WTC11 (cell line): ENCODE measurements at regions of chr10 and their contacts with region 1.

Region 1: DNA sequence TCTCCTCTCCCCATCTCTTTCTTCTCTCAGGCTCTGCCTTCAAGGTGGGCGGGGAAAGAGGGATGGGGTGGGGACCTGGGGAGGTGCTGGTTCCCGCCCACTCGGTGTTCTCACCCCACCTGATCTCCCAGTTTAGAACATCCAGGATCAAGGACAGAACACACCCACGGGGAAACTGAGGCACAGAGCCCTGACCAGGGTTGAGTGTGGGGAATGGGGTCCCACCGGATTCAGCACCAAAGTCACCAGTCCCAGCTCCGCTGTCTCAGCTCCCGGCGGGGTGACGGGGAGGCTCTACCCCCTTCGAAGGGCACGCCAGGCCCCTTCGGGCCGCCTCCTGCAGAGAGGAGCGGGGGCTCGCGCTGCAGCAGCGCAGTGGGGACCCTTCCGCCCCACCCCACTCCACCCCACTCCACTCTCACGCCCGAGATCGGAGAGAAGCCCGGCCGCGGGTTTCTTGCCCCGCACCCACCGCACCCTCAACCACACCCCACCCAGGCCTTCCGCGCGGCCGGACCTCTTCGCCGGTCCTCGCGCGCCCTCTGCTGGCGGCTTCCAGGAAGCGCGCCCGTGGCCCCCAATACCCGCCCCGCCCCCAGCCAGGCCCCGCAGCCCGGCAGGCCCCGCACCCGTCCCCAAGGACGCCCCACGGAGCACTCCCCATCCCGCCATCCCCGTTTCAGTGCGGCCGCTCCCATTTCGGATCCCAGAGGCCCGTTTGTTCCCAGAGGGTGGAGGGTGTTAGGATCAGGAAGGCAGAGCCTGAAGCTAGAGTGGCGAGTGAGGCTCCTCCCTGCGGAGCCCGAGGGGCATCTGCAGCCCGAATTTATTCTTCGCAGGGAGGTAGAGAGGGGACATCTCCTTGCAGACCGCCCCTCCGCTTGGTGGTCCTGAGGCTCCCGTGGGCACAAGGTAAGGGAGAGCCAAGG is 18.0 kb downstream of the POLL start:
- DNase-seq: peak; percentile 82
- ATAC-seq: peak; percentile 55
- H3K4me3 Mint-ChIP-seq: peak overlapping the region; percentile 79
- H3K27ac Mint-ChIP-seq: no peak overlapping the region
- H3K4me1 Mint-ChIP-seq: peaks cover 36% of the 10 kb centered on the region
- H3K27me3 Mint-ChIP-seq: peaks cover 78% of the 10 kb centered on the region
- CTCF ChIP-seq: peak; percentile 95

Region 2: DNA sequence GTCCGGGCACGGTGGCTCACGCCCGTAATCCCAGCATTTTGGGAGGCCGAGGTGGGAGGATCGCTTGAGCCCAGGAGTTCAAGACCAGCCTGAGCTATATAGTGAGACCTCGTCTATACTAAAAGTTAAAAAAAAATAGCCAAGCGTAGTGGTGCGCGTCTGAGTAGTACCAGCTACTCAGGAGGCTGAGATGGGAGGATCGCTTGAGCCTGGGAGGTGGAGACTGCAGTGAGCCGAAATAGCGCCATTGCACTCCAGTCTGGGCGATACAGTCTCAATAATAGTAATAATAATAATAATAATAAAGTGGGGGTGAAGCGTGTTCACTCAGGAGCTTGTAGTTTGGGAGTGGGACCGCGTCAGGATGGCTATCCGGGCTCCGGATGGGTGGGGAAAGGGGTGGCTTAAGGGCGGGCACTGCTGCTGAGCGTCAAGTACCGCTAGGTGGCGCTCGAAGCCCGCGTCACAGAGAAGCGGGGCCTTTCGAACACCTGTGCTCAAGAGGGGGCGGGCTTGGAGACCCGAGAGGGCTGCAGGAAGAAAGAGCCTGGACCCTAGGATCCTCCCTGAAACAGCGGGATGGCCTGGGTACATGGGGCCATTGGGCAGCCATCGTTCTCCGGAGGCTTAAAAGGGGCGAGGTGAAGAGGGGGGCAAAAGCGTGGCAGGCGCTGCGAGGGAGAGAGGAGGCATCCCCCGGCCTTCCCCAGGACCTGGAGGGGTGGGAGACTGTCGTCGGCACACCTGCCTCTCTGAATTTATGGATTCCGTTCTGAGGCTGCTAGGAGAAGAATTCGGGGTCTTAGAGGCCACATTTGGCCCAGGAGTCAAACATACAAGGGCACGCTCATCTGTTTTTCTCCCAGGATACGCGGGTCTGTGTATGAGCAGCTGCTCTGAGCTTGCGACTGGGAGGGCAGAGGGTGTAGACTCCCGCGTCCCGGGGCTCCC is 355.4 kb before region 1 on chr10:
- CTCF ChIA-PET with region 1: interaction called, 80 read pairs
- POLR2A ChIA-PET with region 1: interaction called, 8 read pairs
- DNase-seq: peak; percentile 93
- ATAC-seq: peak; percentile 65
- H3K4me3 Mint-ChIP-seq: peak overlapping the region; percentile 76
- H3K27ac Mint-ChIP-seq: no peak overlapping the region
- H3K4me1 Mint-ChIP-seq: peaks cover 30% of the 10 kb centered on the region
- H3K27me3 Mint-ChIP-seq: peaks cover 96% of the 10 kb centered on the region
- CTCF ChIP-seq: peak; percentile 83

Region 3: GRCh38 chr10:101272229-101272868 is 297.8 kb before region 1 on chr10:
- CTCF ChIA-PET with region 1: interaction called, 15 read pairs
- POLR2A ChIA-PET with region 1: no interaction called
- DNase-seq: peak; percentile 84
- ATAC-seq: peak; percentile 97
- H3K4me3 Mint-ChIP-seq: no peak overlapping the region
- H3K27ac Mint-ChIP-seq: no peak overlapping the region
- H3K4me1 Mint-ChIP-seq: peaks cover 14% of the 10 kb centered on the region
- H3K27me3 Mint-ChIP-seq: peaks cover 15% of the 10 kb centered on the region
- CTCF ChIP-seq: peak; percentile 68

Region 4: GRCh38 chr10:101297901-101298486 is 272.1 kb before region 1 on chr10:
- CTCF ChIA-PET with region 1: interaction called, 35 read pairs
- POLR2A ChIA-PET with region 1: interaction called, 3 read pairs
- DNase-seq: peak; percentile 92
- ATAC-seq: peak; percentile 81
- H3K4me3 Mint-ChIP-seq: no peak overlapping the region
- H3K27ac Mint-ChIP-seq: no peak overlapping the region
- H3K4me1 Mint-ChIP-seq: peaks cover 10% of the 10 kb centered on the region
- H3K27me3 Mint-ChIP-seq: peaks cover 69% of the 10 kb centered on the region
- CTCF ChIP-seq: peak; percentile 86

Region 5: DNA sequence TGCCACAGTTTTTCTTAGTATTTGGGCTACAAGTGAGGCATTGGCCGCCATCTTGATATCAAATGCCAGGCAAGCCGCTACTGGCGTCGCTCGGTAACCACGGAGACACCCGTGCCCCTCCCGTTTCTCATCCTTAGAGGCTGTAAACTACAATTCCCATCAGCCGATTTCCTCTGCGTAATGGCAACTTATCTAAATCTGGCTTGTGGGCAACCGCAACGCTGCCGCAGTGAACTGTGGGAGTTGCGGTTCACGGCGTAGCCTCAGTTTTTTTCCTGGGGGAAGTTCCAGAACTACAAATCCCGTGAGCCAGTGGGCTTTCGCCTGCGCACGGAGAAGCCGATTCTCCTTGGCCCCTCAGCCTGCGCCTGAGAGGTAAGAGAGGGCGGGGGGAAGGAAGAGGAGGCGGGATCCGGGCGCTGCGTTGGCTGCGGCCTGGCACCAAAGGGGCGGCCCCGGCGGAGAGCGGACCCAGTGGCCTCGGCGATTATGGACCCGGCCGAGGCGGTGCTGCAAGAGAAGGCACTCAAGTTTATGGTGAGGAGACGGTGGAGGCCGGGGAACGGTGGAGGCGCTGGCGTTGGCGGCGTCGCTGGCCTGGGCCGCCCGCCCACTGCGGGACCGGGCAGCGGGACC is 216.3 kb before region 1 on chr10 and contains the start of gene BTRC:
- CTCF ChIA-PET with region 1: no interaction called
- POLR2A ChIA-PET with region 1: no interaction called
- DNase-seq: peak; percentile 97
- ATAC-seq: peak; percentile 96
- H3K4me3 Mint-ChIP-seq: peak within 1 kb of the TSS; percentile 98
- H3K27ac Mint-ChIP-seq: peak within 1 kb of the TSS; percentile 97
- H3K4me1 Mint-ChIP-seq: peaks cover 12% of the 10 kb centered on the region
- H3K27me3 Mint-ChIP-seq: peaks cover 8% of the 10 kb centered on the region
- CTCF ChIP-seq: no peak
- total RNA-seq, gene BTRC: 20.6 to 22.4 TPM (median 22.2 TPM) in 3 replicates

Region 6: DNA sequence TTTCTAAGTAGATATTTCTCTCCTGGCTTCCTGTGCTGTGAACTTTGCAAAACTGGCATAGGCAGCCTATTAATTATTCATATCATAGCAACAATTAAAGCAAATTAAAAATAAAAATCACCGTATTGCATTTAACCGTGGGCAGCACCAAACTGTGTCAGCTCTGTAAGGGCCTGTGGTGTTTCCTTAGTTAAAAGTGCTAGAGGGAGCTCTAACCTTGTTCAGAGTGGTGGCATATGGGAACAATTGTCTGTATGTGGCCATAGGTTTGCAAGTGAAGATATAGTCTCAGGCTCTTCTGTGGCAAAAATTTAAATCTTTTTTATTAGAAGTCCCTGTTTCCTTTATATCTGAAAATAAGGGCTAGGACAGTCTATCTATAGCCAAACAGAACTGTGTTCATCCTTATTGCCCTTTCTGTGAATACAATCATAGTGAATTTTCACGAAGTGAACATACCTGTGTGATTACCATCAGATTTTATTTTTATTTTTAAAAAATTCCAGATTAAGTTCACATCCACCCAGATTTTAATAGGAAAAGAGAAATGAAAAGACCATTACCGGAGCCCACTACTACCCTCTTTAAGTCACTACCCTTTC is 74.7 kb before region 1 on chr10:
- CTCF ChIA-PET with region 1: interaction called, 26 read pairs
- POLR2A ChIA-PET with region 1: no interaction called
- DNase-seq: no peak
- ATAC-seq: peak; percentile 95
- H3K4me3 Mint-ChIP-seq: no peak overlapping the region
- H3K27ac Mint-ChIP-seq: no peak overlapping the region
- H3K4me1 Mint-ChIP-seq: peaks cover 26% of the 10 kb centered on the region
- H3K27me3 Mint-ChIP-seq: no peaks in the 10 kb centered on the region
- CTCF ChIP-seq: no peak

Region 7: DNA sequence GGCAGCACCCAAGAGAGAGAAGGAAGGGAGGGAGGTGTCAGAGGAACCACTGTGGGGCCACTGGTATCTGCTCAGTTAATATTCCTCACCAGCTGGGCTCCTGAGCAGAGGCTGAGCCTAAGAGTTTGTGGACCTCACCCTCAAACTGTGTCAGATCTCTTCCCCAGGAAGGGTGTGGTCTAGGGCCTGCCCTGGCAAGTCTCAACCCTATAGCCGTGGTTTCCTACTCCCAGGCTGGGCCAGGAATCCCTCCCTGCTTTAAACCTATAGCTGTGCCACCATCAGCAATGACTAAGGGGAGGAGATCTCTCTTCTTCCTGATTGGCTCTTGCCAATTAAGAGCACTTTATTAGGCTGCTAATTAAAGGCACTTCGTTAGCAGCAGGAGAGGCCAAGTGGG is 11.9 kb before region 1 on chr10:
- CTCF ChIA-PET with region 1: interaction called, 27 read pairs
- POLR2A ChIA-PET with region 1: no interaction called
- DNase-seq: no peak
- ATAC-seq: peak; percentile 24; the same call in 1 of the 2 replicates
- H3K4me3 Mint-ChIP-seq: no peak overlapping the region
- H3K27ac Mint-ChIP-seq: no peak overlapping the region
- H3K4me1 Mint-ChIP-seq: peaks cover 7% of the 10 kb centered on the region
- H3K27me3 Mint-ChIP-seq: peaks cover 2% of the 10 kb centered on the region; the same call in 1 of the 2 replicates
- CTCF ChIP-seq: no peak

Region 8: DNA sequence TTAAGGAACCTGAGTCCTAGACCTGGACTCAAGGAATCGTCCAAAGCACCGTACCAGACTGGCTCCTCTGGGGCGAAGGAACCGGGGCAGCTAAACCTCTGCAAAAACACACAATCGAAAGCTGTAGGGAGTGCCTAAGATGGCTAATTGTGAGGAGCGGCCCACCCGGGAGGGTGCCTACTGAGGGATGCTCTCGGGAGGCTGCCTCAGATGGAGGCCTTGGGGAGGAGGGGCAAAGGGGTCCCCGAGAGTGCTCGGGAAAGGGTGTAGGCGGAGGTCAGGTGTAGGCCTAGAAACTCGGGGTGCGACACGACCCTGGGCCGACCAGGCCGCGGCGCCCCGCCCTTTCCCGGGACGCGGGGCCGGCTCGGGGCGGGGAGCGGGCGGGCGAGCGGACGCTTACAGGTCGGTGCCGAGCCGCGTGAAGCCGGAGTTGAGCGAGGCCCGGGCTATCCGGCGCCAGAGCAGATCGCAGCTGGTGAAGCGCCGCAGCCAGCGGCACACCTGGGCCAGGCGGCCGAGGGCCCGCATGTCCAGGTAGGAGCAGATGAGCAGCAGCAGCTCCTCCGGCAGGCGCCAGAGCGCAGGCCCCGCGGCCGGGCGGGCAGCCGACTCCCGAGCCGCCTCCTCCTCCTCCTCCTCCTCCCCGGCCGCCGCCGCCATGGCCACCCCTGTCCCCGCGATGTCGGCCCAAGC is 124.0 kb after region 1 on chr10:
- CTCF ChIA-PET with region 1: no interaction called
- POLR2A ChIA-PET with region 1: no interaction called
- DNase-seq: peak; percentile 72
- ATAC-seq: peak; percentile 79
- H3K4me3 Mint-ChIP-seq: peak overlapping the region; percentile 81
- H3K27ac Mint-ChIP-seq: peak overlapping the region; percentile 95
- H3K4me1 Mint-ChIP-seq: peaks cover 43% of the 10 kb centered on the region
- H3K27me3 Mint-ChIP-seq: no peaks in the 10 kb centered on the region
- CTCF ChIP-seq: no peak

Region 9: DNA sequence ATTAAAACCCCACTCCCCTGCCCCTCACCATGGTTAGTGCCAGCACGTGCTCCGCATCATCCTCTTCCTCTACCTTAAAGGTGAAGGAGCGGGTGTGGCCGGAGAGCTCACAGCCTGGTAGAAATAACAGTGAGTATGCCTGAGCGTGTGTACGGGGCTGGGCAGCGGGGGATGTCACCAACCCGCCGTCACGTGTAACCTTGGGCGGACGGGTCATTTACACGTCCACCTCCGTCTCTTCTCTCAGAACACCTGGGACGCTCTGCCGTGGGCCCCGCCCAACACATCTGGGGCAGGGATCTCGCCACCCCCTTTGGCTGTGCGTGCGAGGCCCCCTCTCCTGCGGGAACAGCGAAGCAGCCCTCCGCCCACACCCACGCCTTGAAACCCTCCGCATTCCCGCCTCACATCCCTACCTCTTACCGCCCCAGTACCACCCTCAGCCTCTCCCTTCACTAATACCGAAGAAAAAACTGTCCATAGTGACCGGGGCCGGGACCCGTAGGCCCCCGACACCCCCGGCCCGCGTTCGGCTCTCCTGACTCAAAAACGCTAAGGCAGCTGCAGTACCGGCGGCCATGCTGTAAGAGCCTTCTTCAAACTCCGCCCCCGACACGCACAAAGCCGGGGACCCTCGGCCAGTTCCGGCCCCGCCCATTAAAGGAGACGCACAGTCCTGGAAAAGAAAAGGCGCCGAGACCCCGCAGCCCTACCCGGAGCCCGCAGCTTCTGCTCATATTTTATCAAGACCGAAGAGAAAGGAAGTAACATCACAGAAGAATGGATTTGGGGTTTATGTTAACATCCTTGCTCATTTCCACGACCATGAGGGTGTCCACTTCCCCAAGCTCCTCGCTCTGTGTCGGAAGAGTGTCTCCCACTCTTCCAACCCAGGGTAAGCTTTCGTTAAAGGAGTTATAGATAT is 213.0 kb after region 1 on chr10 and contains the start of gene NPM3:
- CTCF ChIA-PET with region 1: interaction called, 38 read pairs
- POLR2A ChIA-PET with region 1: no interaction called
- DNase-seq: peak; percentile 93
- ATAC-seq: peak; percentile 40
- H3K4me3 Mint-ChIP-seq: peak within 1 kb of the TSS; percentile 100
- H3K27ac Mint-ChIP-seq: peak within 1 kb of the TSS; percentile 92
- H3K4me1 Mint-ChIP-seq: peaks cover 47% of the 10 kb centered on the region
- H3K27me3 Mint-ChIP-seq: peaks cover 11% of the 10 kb centered on the region
- CTCF ChIP-seq: no peak
- total RNA-seq, gene NPM3: 223 to 260 TPM (median 229 TPM) in 3 replicates